ENCODE measurements at regions of chr10 and their contacts with region 1.

Region 1: GRCh38 chr10:51960494-51960895 is 261.1 kb upstream of the CSTF2T start:
- DNase-seq: peak; percentile 58
- H3K4me3 Mint-ChIP-seq: no peak overlapping the region
- H3K27ac Mint-ChIP-seq: no peak overlapping the region
- H3K4me1 Mint-ChIP-seq: no peaks in the 10 kb centered on the region
- H3K27me3 Mint-ChIP-seq: peaks cover 84% of the 10 kb centered on the region
- CTCF ChIP-seq: peak; percentile 44

Region 2: DNA sequence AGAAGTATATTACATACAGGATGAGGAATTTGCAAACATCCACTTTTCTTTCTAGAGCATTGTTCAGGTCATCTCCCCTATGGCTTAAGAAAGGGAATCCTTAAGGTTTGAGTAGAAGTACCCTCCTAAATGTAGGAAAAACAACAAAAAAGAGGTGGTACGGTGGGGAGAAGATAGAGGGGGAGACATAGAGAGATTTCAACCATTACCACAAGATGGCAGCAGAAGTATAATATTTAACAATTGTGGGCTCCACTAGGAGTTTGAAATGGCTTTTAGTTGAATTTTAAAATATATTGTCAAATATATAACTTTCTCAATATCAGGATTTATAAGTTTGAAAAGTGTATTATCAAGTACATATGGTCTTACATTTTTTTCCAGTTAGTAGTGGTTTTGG is 958.9 kb before region 1 on chr10:
- CTCF ChIA-PET with region 1: interaction called, 3 read pairs
- POLR2A ChIA-PET with region 1: no interaction called
- intact Hi-C with region 1: loop called (anchors 10 kb)
- DNase-seq: peak; percentile 32
- H3K4me3 Mint-ChIP-seq: no peak overlapping the region
- H3K27ac Mint-ChIP-seq: no peak overlapping the region
- H3K4me1 Mint-ChIP-seq: no peaks in the 10 kb centered on the region
- H3K27me3 Mint-ChIP-seq: peaks cover 67% of the 10 kb centered on the region
- CTCF ChIP-seq: peak; percentile 46

Region 3: GRCh38 chr10:51063659-51064535 is 896.6 kb before region 1 on chr10:
- CTCF ChIA-PET with region 1: interaction called, 38 read pairs
- POLR2A ChIA-PET with region 1: no interaction called
- intact Hi-C with region 1: loop called (anchors 2 kb)
- DNase-seq: peak; percentile 30
- H3K4me3 Mint-ChIP-seq: no peak overlapping the region
- H3K27ac Mint-ChIP-seq: no peak overlapping the region
- H3K4me1 Mint-ChIP-seq: no peaks in the 10 kb centered on the region
- H3K27me3 Mint-ChIP-seq: peaks cover 60% of the 10 kb centered on the region
- CTCF ChIP-seq: peak; percentile 54

Region 4: DNA sequence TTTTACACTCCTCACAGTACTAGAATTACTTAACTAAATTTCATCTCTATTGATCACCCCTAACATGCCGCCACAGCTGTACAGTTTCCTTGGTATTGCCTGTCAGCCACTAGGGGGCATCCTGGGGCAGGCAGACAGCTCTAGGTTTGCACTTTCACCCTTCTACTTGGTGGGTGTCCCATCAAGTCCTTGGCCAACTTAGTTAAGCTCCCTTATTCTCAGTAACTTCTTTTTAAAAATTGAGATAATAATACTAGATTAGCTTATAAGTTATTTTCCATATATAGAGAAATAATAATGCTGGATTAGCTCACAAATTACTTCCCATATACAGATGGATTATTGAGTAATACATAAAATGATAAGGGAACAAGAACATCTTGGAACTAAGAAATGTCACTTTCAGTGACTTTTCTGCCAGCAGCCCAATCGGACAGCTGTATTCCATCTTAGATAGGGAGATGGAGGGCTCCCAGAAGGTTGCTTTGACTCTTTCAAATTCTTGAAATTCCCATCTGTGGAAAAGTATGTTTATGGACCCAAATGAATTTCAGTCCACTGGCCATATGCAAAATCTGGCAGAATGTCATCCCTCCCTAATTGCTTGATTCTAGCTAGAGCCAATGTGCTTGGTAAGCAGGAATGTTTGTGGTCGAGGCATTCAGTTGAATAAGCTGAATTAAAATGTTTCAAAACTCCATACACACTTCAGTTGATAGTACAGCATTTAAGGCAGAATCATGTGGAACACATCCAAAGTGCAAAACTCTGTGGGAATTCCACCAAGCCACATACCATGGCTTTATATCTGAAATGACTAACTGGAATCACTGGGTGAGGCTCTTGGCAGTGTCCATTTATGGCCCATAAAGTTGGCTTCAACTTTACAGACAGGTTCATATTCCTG is 570.8 kb before region 1 on chr10:
- CTCF ChIA-PET with region 1: interaction called, 7 read pairs
- POLR2A ChIA-PET with region 1: no interaction called
- intact Hi-C with region 1: loop called (anchors 1 kb)
- DNase-seq: peak; percentile 64
- H3K4me3 Mint-ChIP-seq: no peak overlapping the region
- H3K27ac Mint-ChIP-seq: no peak overlapping the region
- H3K4me1 Mint-ChIP-seq: peaks cover 19% of the 10 kb centered on the region
- H3K27me3 Mint-ChIP-seq: no peaks in the 10 kb centered on the region
- CTCF ChIP-seq: peak; percentile 72

Region 5: DNA sequence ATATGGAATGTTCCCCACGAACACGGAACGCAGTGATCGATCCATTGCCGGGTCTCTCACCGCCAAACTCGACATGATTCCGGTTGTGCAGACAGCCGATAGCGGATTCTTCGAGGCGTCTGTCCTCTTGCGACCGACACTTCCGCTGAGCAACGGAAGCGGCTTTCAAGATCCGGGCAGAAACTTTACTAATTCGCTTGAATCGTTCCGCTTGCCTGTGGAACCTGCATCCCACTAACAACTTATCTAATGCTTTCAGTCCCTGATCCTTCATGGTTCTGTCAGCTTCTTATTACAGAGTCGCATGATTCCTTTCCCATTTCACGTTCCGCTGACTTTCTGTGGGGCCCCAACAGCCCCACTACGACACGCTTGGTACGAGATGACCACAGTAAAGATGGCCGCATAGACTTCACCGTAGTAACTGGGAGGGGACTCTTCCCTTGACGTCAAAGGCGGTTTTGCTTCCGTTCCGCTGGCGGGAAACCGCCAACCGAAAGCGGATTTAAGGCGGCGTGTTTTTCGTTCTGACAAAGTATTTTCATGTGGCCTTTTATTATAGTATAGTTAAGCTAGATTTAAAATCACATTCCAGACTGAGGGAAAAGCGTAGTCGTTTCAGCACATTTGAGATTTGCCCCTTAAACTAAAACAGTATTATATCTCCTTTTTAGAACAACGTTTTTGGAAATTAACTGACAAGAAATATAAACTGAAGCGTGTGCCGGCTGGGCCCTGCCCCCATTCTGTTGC is 260.8 kb before region 1 on chr10 and contains the start of gene CSTF2T:
- CTCF ChIA-PET with region 1: interaction called, 10 read pairs
- POLR2A ChIA-PET with region 1: no interaction called
- intact Hi-C with region 1: no loop called
- DNase-seq: peak; percentile 93
- H3K4me3 Mint-ChIP-seq: peak within 1 kb of the TSS; percentile 99
- H3K27ac Mint-ChIP-seq: peak within 1 kb of the TSS; percentile 100
- H3K4me1 Mint-ChIP-seq: peaks cover 16% of the 10 kb centered on the region
- H3K27me3 Mint-ChIP-seq: no peaks in the 10 kb centered on the region
- CTCF ChIP-seq: no peak
- total RNA-seq, gene CSTF2T: 15.7 and 18.0 TPM in 2 replicates

Region 6: DNA sequence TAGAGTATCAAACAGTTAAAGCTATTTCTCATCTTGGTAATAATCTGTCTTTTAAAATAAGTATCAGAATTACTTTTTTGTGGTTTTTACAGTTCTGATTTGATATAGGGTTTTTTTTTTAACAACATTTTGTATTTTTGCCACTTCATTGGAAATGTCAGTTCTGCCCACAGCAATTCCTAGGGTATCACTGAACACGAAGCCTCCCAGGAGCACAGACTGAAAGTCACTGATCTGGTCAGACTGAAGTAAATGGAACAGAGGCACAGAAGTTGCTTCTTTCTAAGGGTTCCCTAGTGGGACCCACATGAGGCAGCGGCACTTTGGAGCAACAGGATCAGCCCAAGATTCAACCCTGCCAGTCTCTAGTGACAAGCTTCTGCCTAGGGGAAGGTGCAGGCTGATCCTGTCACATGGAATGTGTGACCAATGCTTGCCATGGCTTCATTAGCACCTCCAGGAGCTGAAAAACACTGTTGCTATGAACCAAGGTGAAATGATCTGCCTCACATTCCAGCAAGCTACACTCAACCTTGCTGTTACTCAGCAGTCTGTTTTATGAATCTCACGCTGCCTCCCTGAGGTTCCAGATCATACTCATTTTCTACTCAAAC is 12.3 kb after region 1 on chr10:
- CTCF ChIA-PET with region 1: interaction called, 14 read pairs
- POLR2A ChIA-PET with region 1: no interaction called
- intact Hi-C with region 1: no loop called
- DNase-seq: no peak
- H3K4me3 Mint-ChIP-seq: no peak overlapping the region
- H3K27ac Mint-ChIP-seq: no peak overlapping the region
- H3K4me1 Mint-ChIP-seq: no peaks in the 10 kb centered on the region
- H3K27me3 Mint-ChIP-seq: peaks cover 44% of the 10 kb centered on the region
- CTCF ChIP-seq: no peak

Region 7: DNA sequence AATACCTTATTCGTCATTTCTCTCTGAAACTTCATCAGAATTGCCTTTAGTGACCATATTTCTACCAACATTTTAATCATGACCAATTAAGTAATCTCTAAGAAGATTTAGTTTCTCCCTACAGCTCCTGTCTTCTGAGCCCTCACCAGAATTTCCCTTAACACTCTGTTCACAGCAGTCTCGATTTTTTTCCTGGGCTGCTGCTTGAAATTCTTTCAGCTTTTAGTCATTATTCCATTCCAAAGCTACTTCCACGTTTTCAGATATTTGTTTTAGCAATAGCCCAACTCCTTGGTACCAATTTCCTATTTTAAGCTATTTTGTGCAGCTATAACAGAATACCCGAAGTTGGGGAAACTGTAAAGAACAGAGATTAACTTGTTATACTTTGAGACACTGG is 161.2 kb after region 1 on chr10:
- CTCF ChIA-PET with region 1: no interaction called
- POLR2A ChIA-PET with region 1: no interaction called
- intact Hi-C with region 1: no loop called
- DNase-seq: no peak
- H3K4me3 Mint-ChIP-seq: no peak overlapping the region
- H3K27ac Mint-ChIP-seq: no peak overlapping the region
- H3K4me1 Mint-ChIP-seq: no peaks in the 10 kb centered on the region
- H3K27me3 Mint-ChIP-seq: peaks cover 44% of the 10 kb centered on the region
- CTCF ChIP-seq: no peak

Region 8: GRCh38 chr10:52215745-52216361 is 255.4 kb after region 1 on chr10:
- CTCF ChIA-PET with region 1: interaction called, 14 read pairs
- POLR2A ChIA-PET with region 1: no interaction called
- intact Hi-C with region 1: no loop called
- DNase-seq: peak; percentile 79
- H3K4me3 Mint-ChIP-seq: no peak overlapping the region
- H3K27ac Mint-ChIP-seq: no peak overlapping the region
- H3K4me1 Mint-ChIP-seq: no peaks in the 10 kb centered on the region
- H3K27me3 Mint-ChIP-seq: no peaks in the 10 kb centered on the region
- CTCF ChIP-seq: peak; percentile 74